Calu3 (cell line): ENCODE measurements at regions of chrX and their contacts with region 1.

Region 1: GRCh38 chrX:115616943-115617563 is 56.1 kb downstream of the PLS3 start:
- DNase-seq: no peak
- H3K4me3 Mint-ChIP-seq: no peak overlapping the region
- H3K27ac Mint-ChIP-seq: no peak overlapping the region
- H3K4me1 Mint-ChIP-seq: peaks cover 13% of the 10 kb centered on the region
- H3K27me3 Mint-ChIP-seq: no peaks in the 10 kb centered on the region
- CTCF ChIP-seq: no peak

Region 2: GRCh38 chrX:115518113-115518512 is 98.9 kb before region 1 on chrX:
- CTCF ChIA-PET with region 1: no interaction called
- intact Hi-C with region 1: no loop called
- DNase-seq: no peak
- H3K4me3 Mint-ChIP-seq: no peak overlapping the region
- H3K27ac Mint-ChIP-seq: no peak overlapping the region
- H3K4me1 Mint-ChIP-seq: no peaks in the 10 kb centered on the region
- H3K27me3 Mint-ChIP-seq: no peaks in the 10 kb centered on the region
- CTCF ChIP-seq: no peak

Region 3: DNA sequence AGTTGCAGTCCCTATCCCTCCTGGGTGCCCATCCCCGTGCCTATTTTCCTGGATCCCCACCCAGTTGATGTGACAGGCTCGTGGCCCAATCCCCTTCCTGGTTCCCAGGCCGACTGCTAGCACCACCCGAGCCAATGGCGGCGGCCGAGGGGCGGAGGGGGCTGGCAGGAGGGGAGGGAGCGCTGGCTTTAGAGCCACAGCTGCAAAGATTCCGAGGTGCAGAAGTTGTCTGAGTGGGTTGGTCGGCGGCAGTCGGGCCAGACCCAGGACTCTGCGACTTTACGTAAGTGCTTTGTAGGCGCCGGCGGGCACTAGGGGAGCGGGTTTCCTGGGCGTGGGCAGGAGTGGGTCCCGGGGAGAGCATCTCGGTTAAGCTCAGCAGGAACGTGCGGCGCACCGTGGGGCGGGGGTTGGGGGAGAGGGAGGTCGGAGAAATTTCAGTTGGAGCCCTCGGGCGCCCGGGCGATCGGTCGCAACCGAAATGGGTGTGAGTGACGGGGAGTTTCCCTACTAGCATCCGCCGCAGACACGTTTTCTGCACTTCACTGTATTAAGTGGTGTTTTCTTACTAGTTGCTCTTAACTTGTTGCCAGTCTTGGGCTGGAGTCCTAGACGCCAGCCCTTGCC is 56.0 kb before region 1 on chrX and contains the start of gene PLS3:
- CTCF ChIA-PET with region 1: no interaction called
- intact Hi-C with region 1: loop called (anchors 10 kb)
- DNase-seq: peak; percentile 88
- H3K4me3 Mint-ChIP-seq: peak within 1 kb of the TSS; percentile 86
- H3K27ac Mint-ChIP-seq: peak within 1 kb of the TSS; percentile 92
- H3K4me1 Mint-ChIP-seq: peaks cover 20% of the 10 kb centered on the region
- H3K27me3 Mint-ChIP-seq: no peaks in the 10 kb centered on the region
- CTCF ChIP-seq: no peak
- total RNA-seq, gene PLS3: 169 and 174 TPM in 2 replicates

Region 4: DNA sequence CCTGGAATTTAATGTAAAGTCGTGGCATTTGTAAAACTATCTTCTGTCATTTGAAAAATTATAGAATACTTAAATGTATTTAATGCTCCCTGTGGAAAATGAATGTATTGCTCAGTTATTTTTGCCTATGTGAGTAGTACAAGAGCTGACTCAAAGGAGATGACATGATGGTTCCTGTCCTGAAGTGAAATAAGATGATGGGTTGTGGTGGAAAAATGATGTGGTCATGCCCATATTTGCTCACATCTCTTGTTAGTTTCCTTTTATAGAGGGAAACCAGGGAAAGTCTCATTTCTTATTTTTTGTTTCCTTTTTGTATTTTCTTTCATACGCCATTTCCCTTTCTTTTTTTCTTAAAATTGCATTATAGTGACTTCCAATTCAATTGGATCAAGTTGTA is 32.4 kb before region 1 on chrX:
- CTCF ChIA-PET with region 1: no interaction called
- intact Hi-C with region 1: loop called (anchors 5 kb)
- DNase-seq: no peak
- H3K4me3 Mint-ChIP-seq: no peak overlapping the region
- H3K27ac Mint-ChIP-seq: no peak overlapping the region
- H3K4me1 Mint-ChIP-seq: peaks cover 48% of the 10 kb centered on the region
- H3K27me3 Mint-ChIP-seq: no peaks in the 10 kb centered on the region
- CTCF ChIP-seq: no peak